Prostate gland (tissue), 2 donors: ENCODE measurements at regions of chr3 and their contacts with region 1.

Region 1: GRCh38 chr3:52220380-52221026 is 4.9 kb downstream of the TLR9 start:
- DNase-seq: peak; percentile 79
- H3K4me3 ChIP-seq: no peak overlapping the region
- H3K27ac ChIP-seq: peak overlapping the region; percentile 10 to 24
- H3K4me1 ChIP-seq: peaks cover 29% of the 10 kb centered on the region
- H3K27me3 ChIP-seq: no peaks in the 10 kb centered on the region
- CTCF ChIP-seq: peak; percentile 86 to 91 (median 90)
- POLR2A ChIP-seq: no peak

Region 2: DNA sequence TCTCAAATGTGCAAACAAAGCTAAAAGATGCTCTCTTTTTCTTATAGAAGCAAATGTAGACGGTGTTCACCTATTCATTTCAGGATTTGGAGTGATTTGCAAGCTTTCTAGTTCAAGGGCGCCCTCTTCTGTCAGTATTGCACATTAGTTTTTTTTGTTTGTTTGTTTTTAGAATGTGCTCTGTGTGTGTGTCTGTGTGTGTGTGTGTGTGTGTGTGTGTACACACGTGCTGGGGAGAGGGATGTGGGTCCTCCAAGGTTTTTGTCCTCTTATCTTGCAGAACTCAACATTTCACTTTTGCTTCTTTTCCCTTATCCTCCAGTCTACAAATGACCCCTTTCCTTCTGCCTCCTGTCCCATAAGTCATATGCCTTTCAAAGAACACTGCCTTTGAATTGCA is 119.1 kb after region 1 on chr3:
- intact Hi-C with region 1: loop called (anchors 5 kb)
- DNase-seq: peak; percentile 61
- H3K4me3 ChIP-seq: no peak overlapping the region
- H3K27ac ChIP-seq: no peak overlapping the region
- H3K4me1 ChIP-seq: no peaks in the 10 kb centered on the region
- H3K27me3 ChIP-seq: no peaks in the 10 kb centered on the region
- CTCF ChIP-seq: peak; percentile 42 to 85 (median 71)
- POLR2A ChIP-seq: no peak